IMR-90 (cell line): ENCODE measurements at regions of chr11 and their contacts with region 1.

Region 1: GRCh38 chr11:12331239-12331874 is 46.0 kb upstream of the PARVA start:
- DNase-seq: peak; percentile 88
- ATAC-seq: peak; percentile 97
- H3K4me3 ChIP-seq: no peak overlapping the region
- H3K27ac ChIP-seq: no peak overlapping the region
- H3K4me1 ChIP-seq: peaks cover 4% of the 10 kb centered on the region
- H3K27me3 ChIP-seq: no peaks in the 10 kb centered on the region
- CTCF ChIP-seq: peak; percentile 94
- POLR2A ChIP-seq: 0 out of 2 replicates have a peak, but pooled peaks have one; percentile 42
- RAD21 ChIP-seq: peak; percentile 98

Region 2: GRCh38 chr11:12318791-12319438 is 12.4 kb before region 1 on chr11:
- CTCF ChIA-PET with region 1: interaction called, 13 read pairs
- POLR2A ChIA-PET with region 1: no interaction called
- dilution Hi-C with region 1: no loop called
- in situ Hi-C with region 1: no loop called
- intact Hi-C with region 1: no loop called
- DNase-seq: peak; percentile 89
- ATAC-seq: peak; percentile 70
- H3K4me3 ChIP-seq: no peak overlapping the region
- H3K27ac ChIP-seq: peak overlapping the region; percentile 96
- H3K4me1 ChIP-seq: peaks cover 23% of the 10 kb centered on the region
- H3K27me3 ChIP-seq: no peaks in the 10 kb centered on the region
- CTCF ChIP-seq: no peak
- POLR2A ChIP-seq: no peak
- RAD21 ChIP-seq: no peak

Region 3: DNA sequence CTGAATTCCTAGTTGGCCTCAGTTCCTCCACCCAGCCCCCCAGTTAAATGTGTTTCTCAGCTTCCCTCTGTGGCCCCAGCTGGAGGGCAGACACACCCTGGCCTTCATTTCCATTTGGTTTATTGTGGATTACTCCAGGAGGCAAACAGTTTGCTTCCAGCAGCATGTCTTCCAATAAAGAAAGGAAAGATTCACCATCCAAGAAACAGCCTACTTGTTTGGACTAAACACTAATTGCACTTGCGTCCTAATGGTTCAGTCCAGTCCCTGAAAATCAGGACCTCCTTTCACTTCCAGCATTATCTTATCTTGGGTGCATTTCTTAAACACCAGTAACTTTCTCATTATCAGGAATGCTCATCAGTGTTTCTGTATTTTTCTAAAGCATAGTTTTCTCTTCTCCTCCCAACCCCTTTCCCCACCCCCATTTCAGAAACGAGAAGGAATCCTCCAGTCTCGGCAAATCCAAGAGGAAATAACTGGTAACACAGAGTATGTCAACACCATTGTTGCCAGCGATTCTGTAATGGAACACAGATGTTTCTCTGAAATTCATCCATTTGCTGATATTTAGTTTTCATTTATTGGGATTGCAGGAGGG is 176.9 kb after region 1 on chr11:
- CTCF ChIA-PET with region 1: interaction called, 3 read pairs
- POLR2A ChIA-PET with region 1: no interaction called
- dilution Hi-C with region 1: no loop called
- in situ Hi-C with region 1: no loop called
- intact Hi-C with region 1: loop called (anchors 5 kb)
- DNase-seq: peak; percentile 75
- ATAC-seq: peak; percentile 80
- H3K4me3 ChIP-seq: no peak overlapping the region
- H3K27ac ChIP-seq: peak overlapping the region; percentile 88; the same call in 1 of the 2 replicates
- H3K4me1 ChIP-seq: peaks cover 17% of the 10 kb centered on the region
- H3K27me3 ChIP-seq: no peaks in the 10 kb centered on the region
- CTCF ChIP-seq: no peak
- POLR2A ChIP-seq: no peak
- RAD21 ChIP-seq: no peak

Region 4: GRCh38 chr11:12693479-12694181 is 362.3 kb after region 1 on chr11:
- CTCF ChIA-PET with region 1: interaction called, 4 read pairs
- POLR2A ChIA-PET with region 1: no interaction called
- dilution Hi-C with region 1: no loop called
- in situ Hi-C with region 1: no loop called
- intact Hi-C with region 1: loop called (anchors 5 kb)
- DNase-seq: peak; percentile 99
- ATAC-seq: peak; percentile 76
- H3K4me3 ChIP-seq: peak overlapping the region; percentile 0; the same call in 1 of the 2 replicates
- H3K27ac ChIP-seq: peak overlapping the region; percentile 76
- H3K4me1 ChIP-seq: peaks cover 45% of the 10 kb centered on the region
- H3K27me3 ChIP-seq: no peaks in the 10 kb centered on the region
- CTCF ChIP-seq: no peak
- POLR2A ChIP-seq: peak; percentile 83
- RAD21 ChIP-seq: peak; percentile 10; the same call in 1 of the 2 replicates

Region 5: DNA sequence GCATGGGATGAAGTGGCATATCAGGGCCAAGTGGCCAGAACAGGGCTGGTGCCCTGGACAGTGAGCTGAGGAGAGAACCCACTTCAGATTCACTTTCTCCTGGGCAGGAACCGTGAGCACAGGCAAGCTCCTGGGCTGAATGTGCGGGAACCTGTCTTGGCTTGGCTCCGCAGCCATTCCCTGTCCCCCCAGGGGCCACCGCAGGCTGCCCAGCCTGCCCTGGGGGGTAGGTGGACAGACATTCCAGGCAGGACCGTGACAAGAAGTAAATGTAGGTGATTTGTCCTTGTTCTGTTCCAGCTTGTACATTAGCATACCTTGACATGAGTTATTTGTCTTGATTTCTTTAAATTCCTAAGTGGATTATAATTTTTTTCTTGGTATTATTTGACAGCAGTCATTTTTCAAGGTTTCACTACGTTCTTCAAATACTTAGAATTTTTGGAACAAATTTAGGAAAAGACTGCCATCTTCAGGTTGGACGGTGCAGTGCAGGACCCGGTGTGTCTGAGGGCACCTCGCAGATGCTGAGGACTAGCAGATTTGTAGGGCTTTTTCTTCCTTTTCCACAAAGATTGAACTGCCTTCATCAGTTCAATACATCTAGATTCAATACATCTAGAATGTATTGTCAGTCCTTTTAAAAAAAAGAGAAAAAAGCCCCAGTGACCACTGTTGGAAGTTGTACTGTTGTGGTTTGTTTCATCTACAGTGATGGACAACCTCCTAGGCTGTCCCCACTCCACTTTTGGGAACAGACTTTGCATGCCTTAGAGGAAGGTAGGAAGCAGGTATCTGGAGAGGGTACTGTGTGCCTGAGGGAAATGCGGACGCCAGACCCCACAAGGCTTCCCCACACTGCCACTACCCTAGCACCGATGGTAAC is 562.7 kb after region 1 on chr11:
- CTCF ChIA-PET with region 1: interaction called, 14 read pairs
- POLR2A ChIA-PET with region 1: no interaction called
- dilution Hi-C with region 1: no loop called
- in situ Hi-C with region 1: loop called (anchors 10 kb)
- intact Hi-C with region 1: loop called (anchors 1 kb)
- DNase-seq: peak; percentile 52
- ATAC-seq: peak; percentile 68
- H3K4me3 ChIP-seq: no peak overlapping the region
- H3K27ac ChIP-seq: peak overlapping the region; percentile 56
- H3K4me1 ChIP-seq: peaks cover 25% of the 10 kb centered on the region
- H3K27me3 ChIP-seq: no peaks in the 10 kb centered on the region
- CTCF ChIP-seq: peak; percentile 83
- POLR2A ChIP-seq: no peak
- RAD21 ChIP-seq: peak; percentile 69

Region 6: GRCh38 chr11:13183094-13183825 is 851.9 kb after region 1 on chr11:
- CTCF ChIA-PET with region 1: no interaction called
- POLR2A ChIA-PET with region 1: no interaction called
- dilution Hi-C with region 1: no loop called
- in situ Hi-C with region 1: no loop called
- intact Hi-C with region 1: loop called (anchors 1 kb)
- DNase-seq: peak; percentile 54
- ATAC-seq: peak; percentile 95
- H3K4me3 ChIP-seq: no peak overlapping the region; the same call in 1 of the 2 replicates
- H3K27ac ChIP-seq: no peak overlapping the region
- H3K4me1 ChIP-seq: no peaks in the 10 kb centered on the region
- H3K27me3 ChIP-seq: peaks cover 3% of the 10 kb centered on the region; the same call in 1 of the 2 replicates
- CTCF ChIP-seq: peak; percentile 66
- POLR2A ChIP-seq: no peak
- RAD21 ChIP-seq: peak; percentile 58